Right cardiac atrium (tissue), 5 donors: ENCODE measurements at regions of chr19 and their contacts with region 1.

Region 1: DNA sequence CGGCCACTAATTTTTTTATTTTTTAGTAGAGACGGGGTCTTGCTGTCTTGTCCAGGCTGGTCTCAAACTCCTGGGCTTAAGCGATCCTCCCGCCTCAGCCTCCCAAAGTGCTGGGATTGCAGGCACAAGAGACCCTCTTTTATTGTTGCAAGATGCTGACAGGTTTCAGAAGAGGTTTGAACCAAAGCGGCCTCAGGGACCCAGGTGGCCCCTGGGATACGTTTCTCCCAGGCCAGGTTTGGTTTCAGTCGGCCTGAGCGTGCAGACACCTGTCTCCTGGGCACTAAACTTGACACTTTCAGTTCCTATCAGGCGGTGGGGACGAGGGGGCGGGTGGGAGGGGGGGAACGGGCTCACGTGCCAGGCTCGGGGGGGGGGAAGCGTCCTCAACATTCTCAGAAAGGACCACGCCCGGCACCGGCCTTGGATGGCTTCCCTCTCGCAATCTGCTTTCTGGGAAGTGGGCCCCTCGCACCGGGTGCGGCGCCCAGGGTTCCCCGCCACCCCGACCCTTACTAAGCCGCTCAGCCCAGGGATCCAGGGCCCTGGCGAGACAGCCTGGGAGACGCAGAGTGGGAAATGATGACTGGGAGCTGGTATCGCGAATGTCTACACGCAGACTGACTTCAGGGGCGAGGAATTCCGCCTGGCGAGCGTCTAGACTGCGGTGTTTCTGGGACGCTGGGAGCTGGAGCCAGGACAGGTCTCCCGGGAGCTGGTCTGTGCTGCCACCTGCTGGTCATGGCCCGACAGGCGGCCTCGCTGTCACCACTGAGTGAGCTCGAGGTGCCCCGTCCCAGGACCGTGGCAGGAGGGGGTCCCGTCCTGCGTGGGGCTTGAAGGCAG is 91.6 kb downstream of the GNG7 start:
- DNase-seq: peak; percentile 95 to 97 (median 97)
- ATAC-seq: peak; percentile 89 to 90
- H3K4me3 ChIP-seq: peak overlapping the region; percentile 5
- H3K27ac ChIP-seq: peak overlapping the region; percentile 54
- H3K4me1 ChIP-seq: no peaks in the 10 kb centered on the region
- H3K27me3 ChIP-seq: no peaks in the 10 kb centered on the region

Region 2: GRCh38 chr19:2394442-2395292 is 216.2 kb before region 1 on chr19:
- intact Hi-C with region 1: no loop called
- DNase-seq: peak in 1 of 3 donors; percentile 42
- ATAC-seq: no peak
- H3K4me3 ChIP-seq: no peak overlapping the region
- H3K27ac ChIP-seq: no peak overlapping the region
- H3K4me1 ChIP-seq: no peaks in the 10 kb centered on the region
- H3K27me3 ChIP-seq: no peaks in the 10 kb centered on the region

Region 3: GRCh38 chr19:2475702-2476450 is 135.0 kb before region 1 on chr19 and contains the start of gene GADD45B:
- intact Hi-C with region 1: loop called (anchors 2 to 5 kb)
- DNase-seq: peak; percentile 98 to 99 (median 99)
- ATAC-seq: peak; percentile 82 to 83
- H3K4me3 ChIP-seq: peak within 1 kb of the TSS; percentile 84
- H3K27ac ChIP-seq: peak within 1 kb of the TSS; percentile 97
- H3K4me1 ChIP-seq: no peaks in the 10 kb centered on the region
- H3K27me3 ChIP-seq: no peaks in the 10 kb centered on the region
- total RNA-seq, gene GADD45B: 52.4 to 205 (median 78.9) TPM

Region 4: GRCh38 chr19:2578901-2579677 is 31.8 kb before region 1 on chr19:
- intact Hi-C with region 1: loop called in 1 of 4 experiments (anchors 5 kb)
- DNase-seq: peak; percentile 92 to 97 (median 96)
- ATAC-seq: peak; percentile 89
- H3K4me3 ChIP-seq: peak overlapping the region; percentile 1
- H3K27ac ChIP-seq: peak overlapping the region; percentile 97
- H3K4me1 ChIP-seq: peaks cover 12% of the 10 kb centered on the region
- H3K27me3 ChIP-seq: no peaks in the 10 kb centered on the region

Region 5: GRCh38 chr19:2888731-2889224 is 277.9 kb after region 1 on chr19:
- intact Hi-C with region 1: no loop called
- DNase-seq: peak; percentile 59 to 74 (median 72)
- ATAC-seq: peak; percentile 27 to 57
- H3K4me3 ChIP-seq: no peak overlapping the region
- H3K27ac ChIP-seq: no peak overlapping the region
- H3K4me1 ChIP-seq: no peaks in the 10 kb centered on the region
- H3K27me3 ChIP-seq: no peaks in the 10 kb centered on the region